ENCODE measurements at regions of chr6 and their contacts with region 1.

Region 1: GRCh38 chr6:79570129-79571029 is 33.1 kb upstream of the LCA5 start:
- DNase-seq: peak in 5 of 10 donors; percentile 20 to 70 (median 54)
- H3K4me3 ChIP-seq: peak overlapping the region in 58 of 59 donors; percentile 2 to 67 (median 46)
- H3K27ac ChIP-seq: peak overlapping the region in 48 of 59 donors; percentile 2 to 83 (median 54)
- H3K27me3 ChIP-seq: no peaks in the 10 kb centered on the region
- CTCF ChIP-seq: peak; percentile 53 to 84 (median 71)

Region 2: GRCh38 chr6:79713701-79714322 is 143.4 kb after region 1 on chr6:
- intact Hi-C with region 1: loop called (anchors 5 to 10 kb)
- DNase-seq: peak in 4 of 10 donors; percentile 47 to 63 (median 58)
- H3K4me3 ChIP-seq: no peak overlapping the region
- H3K27ac ChIP-seq: peak overlapping the region in 28 of 59 donors; percentile 3 to 85 (median 61)
- H3K27me3 ChIP-seq: no peaks in the 10 kb centered on the region
- CTCF ChIP-seq: peak in 55 of 56 donors; percentile 38 to 80 (median 65)

Region 3: DNA sequence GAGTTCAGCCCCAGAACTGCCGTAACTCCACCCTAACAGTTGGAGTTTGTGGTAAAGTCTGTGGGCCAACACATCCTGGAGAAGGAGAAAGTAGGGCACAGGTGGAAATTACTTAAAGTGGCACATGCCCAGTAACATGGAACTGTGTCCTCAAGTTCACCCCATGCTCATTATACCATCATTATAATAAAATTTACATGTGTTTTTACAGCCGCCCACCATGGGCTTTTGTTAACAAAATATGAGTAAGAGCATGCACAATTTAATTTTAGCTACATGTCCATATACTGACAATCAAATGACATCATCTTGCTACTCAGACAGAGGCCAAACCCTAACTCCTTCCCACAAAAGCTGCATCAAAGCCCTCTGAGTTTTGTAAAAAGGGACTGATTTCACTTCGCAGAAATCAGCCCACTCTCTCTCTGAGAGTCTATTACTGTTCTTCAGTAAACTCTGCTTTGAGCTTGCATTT is 394.3 kb after region 1 on chr6:
- intact Hi-C with region 1: no loop called
- DNase-seq: no peak
- H3K4me3 ChIP-seq: no peak overlapping the region
- H3K27ac ChIP-seq: no peak overlapping the region
- H3K27me3 ChIP-seq: no peaks in the 10 kb centered on the region
- CTCF ChIP-seq: no peak